HepG2 (cell line): ENCODE measurements at regions of chr1 and their contacts with region 1.

Region 1: DNA sequence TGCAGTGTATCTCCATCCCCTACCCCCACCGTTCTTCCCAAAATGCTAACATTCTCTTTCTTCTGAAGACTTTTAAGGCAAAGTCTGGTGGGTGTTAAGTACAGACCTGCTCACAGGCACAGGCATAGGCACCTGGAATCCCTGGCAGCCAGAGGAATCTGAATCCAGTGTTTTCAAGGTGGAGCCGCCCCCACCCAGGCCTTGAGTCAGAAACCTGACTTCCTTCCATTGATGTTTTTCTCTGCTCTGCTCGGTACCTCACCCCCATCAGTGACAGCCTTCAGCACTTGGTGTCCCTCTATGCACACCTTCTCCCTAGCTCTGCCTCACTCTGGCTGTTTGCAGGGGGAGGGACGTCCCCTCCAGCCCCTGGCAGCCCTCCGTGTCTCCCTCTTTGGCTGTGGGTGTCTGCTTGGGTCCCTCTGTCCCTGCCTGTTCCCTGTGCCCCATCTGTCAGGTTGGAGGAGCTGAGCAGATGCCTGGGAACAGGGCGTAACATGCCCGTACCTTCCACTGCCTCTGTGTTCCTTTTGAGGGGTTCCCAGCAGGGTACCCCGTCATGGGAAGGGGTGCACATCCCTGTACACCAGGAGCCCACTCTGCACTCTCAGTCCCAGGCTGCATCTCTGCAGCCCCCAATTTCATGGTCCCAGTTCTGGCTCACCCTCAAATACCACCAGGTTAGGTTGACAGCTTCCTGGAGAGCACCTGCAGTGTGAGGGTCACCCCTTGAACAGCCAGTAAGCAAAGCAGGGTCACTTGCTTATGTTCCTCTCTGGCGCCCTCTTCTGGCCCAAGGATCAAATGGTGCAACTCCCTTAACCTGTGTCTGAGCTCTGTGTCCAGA is 6.7 kb downstream of the NCDN start:
- DNase-seq: peak; percentile 73
- ATAC-seq: peak; percentile 70
- H3K4me3 ChIP-seq: no peak overlapping the region
- H3K27ac ChIP-seq: no peak overlapping the region
- H3K4me1 ChIP-seq: no peaks in the 10 kb centered on the region
- H3K27me3 ChIP-seq: no peaks in the 10 kb centered on the region
- CTCF ChIP-seq: peak; percentile 85
- EP300 ChIP-seq: no peak
- POLR2A ChIP-seq: no peak
- RAD21 ChIP-seq: peak; percentile 34; the same call in 1 of the 2 replicates

Region 2: GRCh38 chr1:35451125-35451528 is 113.1 kb before region 1 on chr1:
- CTCF ChIA-PET with region 1: interaction called, 13 read pairs
- POLR2A ChIA-PET with region 1: no interaction called
- in situ Hi-C with region 1: loop called (anchors 5 kb)
- intact Hi-C with region 1: loop called (anchors 1 kb)
- DNase-seq: peak; percentile 55
- ATAC-seq: peak; percentile 98
- H3K4me3 ChIP-seq: no peak overlapping the region
- H3K27ac ChIP-seq: no peak overlapping the region
- H3K4me1 ChIP-seq: peaks cover 29% of the 10 kb centered on the region
- H3K27me3 ChIP-seq: no peaks in the 10 kb centered on the region
- CTCF ChIP-seq: peak; percentile 86
- EP300 ChIP-seq: no peak
- POLR2A ChIP-seq: no peak
- RAD21 ChIP-seq: peak; percentile 68

Region 3: GRCh38 chr1:35715568-35716002 is 151.3 kb after region 1 on chr1:
- CTCF ChIA-PET with region 1: interaction called, 20 read pairs
- POLR2A ChIA-PET with region 1: interaction called, 4 read pairs
- in situ Hi-C with region 1: loop called (anchors 5 kb)
- intact Hi-C with region 1: loop called (anchors 1 kb)
- DNase-seq: peak; percentile 68
- ATAC-seq: peak; percentile 95
- H3K4me3 ChIP-seq: no peak overlapping the region
- H3K27ac ChIP-seq: no peak overlapping the region
- H3K4me1 ChIP-seq: peaks cover 4% of the 10 kb centered on the region
- H3K27me3 ChIP-seq: no peaks in the 10 kb centered on the region
- CTCF ChIP-seq: peak; percentile 90
- EP300 ChIP-seq: 0 out of 4 replicates have a peak, but pooled peaks of 1 of the 2 experiments have one; percentile 25
- POLR2A ChIP-seq: no peak
- RAD21 ChIP-seq: peak; percentile 71

Region 4: DNA sequence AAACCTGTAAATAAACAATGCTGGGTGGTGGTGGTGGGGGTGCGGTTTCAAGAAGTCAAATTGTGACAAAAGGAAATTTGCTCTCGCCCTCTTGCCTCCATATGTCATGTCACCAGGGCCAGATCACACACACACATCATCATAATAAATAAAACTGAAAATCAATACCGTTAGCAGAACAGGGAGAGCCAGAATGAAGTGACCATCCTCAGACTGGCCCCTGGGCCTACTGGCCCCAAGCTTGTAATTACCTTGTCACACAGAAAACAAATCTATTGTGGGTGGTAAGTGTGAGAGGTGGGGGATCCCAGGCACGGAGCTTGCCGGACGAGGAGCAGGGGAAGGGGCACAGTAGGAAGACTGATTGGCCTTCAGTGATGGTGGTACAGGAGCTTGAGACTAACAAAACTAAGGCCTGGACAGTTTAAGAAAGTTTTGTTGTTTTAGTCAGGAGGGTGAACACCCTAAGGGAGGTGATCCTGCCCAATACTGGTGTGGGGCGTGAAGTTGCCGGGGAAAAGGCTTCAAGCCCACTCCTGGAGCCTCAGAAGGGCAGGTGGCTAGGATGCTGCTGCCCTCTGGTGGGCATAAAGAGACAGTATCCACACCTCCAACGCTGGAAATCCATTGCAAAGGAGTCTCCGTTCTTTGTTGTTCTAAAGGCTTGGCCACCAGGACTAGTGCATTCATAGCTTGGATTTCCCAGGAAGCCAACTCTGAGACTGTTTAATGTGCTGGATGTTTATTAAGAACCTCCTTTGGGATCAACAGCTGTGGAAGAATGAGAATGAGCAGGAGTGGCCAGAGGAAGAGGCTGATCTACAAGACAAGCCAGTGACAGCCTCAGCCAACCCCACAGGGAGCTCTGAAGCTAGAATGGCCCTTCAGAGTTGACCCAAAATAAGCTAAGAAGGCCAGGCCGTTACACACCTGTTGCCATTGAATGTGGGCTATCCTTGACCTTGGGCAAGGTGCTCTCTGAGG is 162.5 kb after region 1 on chr1:
- CTCF ChIA-PET with region 1: interaction called, 15 read pairs
- POLR2A ChIA-PET with region 1: no interaction called
- in situ Hi-C with region 1: no loop called
- intact Hi-C with region 1: loop called (anchors 1 kb)
- DNase-seq: peak; percentile 53
- ATAC-seq: peak; percentile 97
- H3K4me3 ChIP-seq: no peak overlapping the region
- H3K27ac ChIP-seq: no peak overlapping the region
- H3K4me1 ChIP-seq: no peaks in the 10 kb centered on the region
- H3K27me3 ChIP-seq: no peaks in the 10 kb centered on the region
- CTCF ChIP-seq: peak; percentile 91
- EP300 ChIP-seq: no peak
- POLR2A ChIP-seq: no peak
- RAD21 ChIP-seq: peak; percentile 79

Region 5: DNA sequence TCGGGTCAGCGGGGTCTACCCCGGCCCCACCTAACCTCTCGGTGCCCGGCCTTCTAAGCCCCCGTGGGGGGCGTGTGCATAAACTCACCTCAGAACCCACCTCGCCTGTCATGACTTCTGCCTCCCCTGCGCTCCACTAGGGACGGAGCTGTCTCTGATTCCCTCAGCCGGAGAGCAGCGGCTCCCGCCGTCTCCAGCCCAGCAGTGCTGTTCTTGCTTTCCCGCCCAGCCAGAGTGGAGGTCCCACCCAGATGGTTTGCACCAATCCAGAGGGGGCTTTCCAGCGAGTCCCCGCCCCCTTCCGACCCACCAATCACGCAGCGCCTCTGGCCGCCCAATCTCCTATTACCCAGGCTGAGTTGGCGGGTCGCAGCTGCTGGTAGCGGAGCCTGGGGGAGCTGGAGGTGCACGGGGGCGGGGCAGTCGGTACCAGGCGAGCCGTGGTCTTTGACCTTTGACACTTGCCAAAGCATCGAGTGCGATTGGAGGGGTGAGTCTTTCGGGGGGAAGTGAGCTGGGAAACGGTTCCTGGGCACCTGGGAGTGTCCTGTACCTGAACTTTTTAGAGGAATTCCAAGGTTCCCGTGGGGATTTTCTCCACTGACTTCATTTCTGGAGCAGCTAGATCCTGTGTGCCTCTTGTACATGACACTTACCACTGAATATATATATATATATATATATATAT is 205.6 kb after region 1 on chr1 and contains the start of gene CLSPN:
- CTCF ChIA-PET with region 1: interaction called, 12 read pairs
- POLR2A ChIA-PET with region 1: no interaction called
- in situ Hi-C with region 1: loop called (anchors 5 kb)
- intact Hi-C with region 1: loop called (anchors 1 kb)
- DNase-seq: peak; percentile 94
- ATAC-seq: peak; percentile 96
- H3K4me3 ChIP-seq: peak within 1 kb of the TSS; percentile 86 to 99 (median 88)
- H3K27ac ChIP-seq: peak within 1 kb of the TSS; percentile 86
- H3K4me1 ChIP-seq: peaks cover 26% of the 10 kb centered on the region; the same call in 1 of the 2 replicates
- H3K27me3 ChIP-seq: no peaks in the 10 kb centered on the region
- CTCF ChIP-seq: no peak
- EP300 ChIP-seq: peak in 1 of 2 experiments; percentile 20; a peak in 1 of 4 replicates
- POLR2A ChIP-seq: peak; percentile 73 to 94
- RAD21 ChIP-seq: no peak
- total RNA-seq, gene CLSPN: 32.5 and 51.7 TPM in 2 replicates